Colonic mucosa (tissue), 4 donors: ENCODE measurements at regions of chr11 and their contacts with region 1.

Region 1: DNA sequence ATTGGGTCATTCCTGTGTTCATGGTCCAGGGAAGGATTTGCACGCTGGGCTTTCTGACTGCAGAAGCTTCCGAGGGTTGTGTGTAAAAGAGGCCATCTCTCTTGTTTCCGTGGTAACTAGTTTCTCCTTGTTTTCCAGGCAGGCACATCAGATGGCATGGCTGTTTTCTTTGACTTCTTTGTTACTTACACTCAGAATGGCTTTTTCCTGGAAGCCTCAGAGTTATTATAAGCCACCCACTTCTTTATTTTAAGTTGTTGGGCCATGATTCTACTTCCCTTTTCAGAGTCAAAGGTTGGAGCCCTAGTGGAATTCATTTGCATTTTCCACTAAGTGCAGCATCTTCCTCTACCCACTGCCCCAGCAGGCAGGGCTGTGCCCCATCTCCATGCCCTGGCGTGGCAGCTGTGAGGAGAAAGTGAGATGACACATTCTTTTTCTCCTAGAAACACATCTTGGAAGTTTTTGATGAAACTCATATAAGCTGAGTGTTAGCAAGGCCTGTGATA is 94.9 kb downstream of the PRR5L start:
- DNase-seq: no peak
- H3K4me3 ChIP-seq: no peak overlapping the region
- H3K27ac ChIP-seq: no peak overlapping the region
- H3K4me1 ChIP-seq: no peaks in the 10 kb centered on the region
- H3K27me3 ChIP-seq: no peaks in the 10 kb centered on the region
- CTCF ChIP-seq: no peak

Region 2: DNA sequence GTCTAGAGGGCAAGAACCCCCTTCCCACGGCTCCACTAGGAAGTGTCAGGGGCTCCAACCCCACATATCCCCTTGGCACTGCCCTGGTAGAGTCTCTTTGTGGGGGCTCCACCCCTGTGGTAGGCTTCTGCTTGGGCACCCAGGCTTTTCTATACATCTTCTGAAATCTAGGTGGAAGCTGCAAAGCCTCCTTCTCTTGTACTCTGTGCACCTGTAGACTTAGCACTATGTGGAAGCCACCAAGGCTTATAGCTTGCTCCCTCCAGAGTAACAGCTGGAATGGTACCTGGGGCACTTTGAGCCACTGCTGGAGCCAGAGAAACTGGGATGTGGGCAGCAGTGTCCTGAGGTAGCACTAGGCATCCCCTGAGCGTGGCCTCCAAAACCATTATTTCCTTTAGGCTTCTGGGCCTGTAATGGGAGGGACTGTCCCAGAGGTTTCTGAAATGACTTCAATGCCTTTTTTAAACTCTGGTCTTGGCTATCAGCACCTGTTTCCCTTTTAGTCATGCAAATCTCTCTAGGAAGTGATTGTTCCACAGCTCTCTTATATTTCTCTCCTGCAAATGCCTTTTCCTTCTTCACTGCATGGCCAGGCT is 50.7 kb after region 1 on chr11:
- intact Hi-C with region 1: loop called (anchors 10 kb)
- DNase-seq: no peak
- H3K4me3 ChIP-seq: no peak overlapping the region
- H3K27ac ChIP-seq: no peak overlapping the region
- H3K4me1 ChIP-seq: no peaks in the 10 kb centered on the region
- H3K27me3 ChIP-seq: no peaks in the 10 kb centered on the region
- CTCF ChIP-seq: no peak